PC-9 (cell line): ENCODE measurements at regions of chr10 and their contacts with region 1.

Region 1: GRCh38 chr10:13882112-13882711 is 295.4 kb downstream of the PRPF18 start:
- DNase-seq: peak; percentile 82 to 97
- H3K4me3 ChIP-seq: peak overlapping the region; percentile 19; the same call in 1 of the 2 replicates
- H3K27ac ChIP-seq: peak overlapping the region; percentile 85
- H3K4me1 ChIP-seq: peaks cover 46% of the 10 kb centered on the region
- H3K27me3 ChIP-seq: no peaks in the 10 kb centered on the region
- CTCF ChIP-seq: no peak

Region 2: DNA sequence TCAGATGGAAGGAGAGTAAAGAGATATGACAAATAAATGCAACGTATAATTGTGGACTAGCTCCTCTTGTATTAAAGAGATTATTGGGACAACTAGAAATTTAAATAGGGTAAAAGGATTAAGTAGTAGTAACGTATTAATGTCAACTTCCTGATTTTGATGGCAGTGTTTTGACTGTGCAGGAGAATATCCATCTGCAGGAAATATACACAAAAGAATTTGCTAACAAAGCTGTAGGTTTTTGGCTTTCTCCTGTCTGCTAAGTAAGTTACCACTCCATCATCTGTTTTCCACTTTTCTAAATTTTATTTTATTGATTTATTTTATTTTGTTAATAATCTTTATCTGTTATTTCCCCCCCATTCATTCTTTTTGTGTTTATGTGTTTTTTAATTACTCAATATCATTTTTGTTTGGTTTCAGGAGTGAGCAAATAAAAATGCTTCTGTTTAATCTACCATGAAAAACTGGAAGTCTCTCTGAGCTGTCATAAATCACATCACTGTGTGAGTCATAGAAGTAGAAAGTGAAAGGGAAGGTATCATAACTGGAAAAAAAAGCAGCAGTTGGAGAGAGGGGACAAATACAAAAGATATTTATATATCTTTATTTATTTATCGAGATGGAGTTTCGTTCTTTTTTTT is 325.4 kb before region 1 on chr10:
- CTCF ChIA-PET with region 1: no interaction called
- POLR2A ChIA-PET with region 1: no interaction called
- intact Hi-C with region 1: no loop called
- DNase-seq: peak in 1 of 2 experiments; percentile 71
- H3K4me3 ChIP-seq: no peak overlapping the region
- H3K27ac ChIP-seq: no peak overlapping the region
- H3K4me1 ChIP-seq: 0 out of 2 replicates have a peak, but pooled peaks cover 7% of the 10 kb centered on the region
- H3K27me3 ChIP-seq: peaks cover 45% of the 10 kb centered on the region
- CTCF ChIP-seq: no peak

Region 3: GRCh38 chr10:13787015-13787421 is 95.2 kb before region 1 on chr10:
- CTCF ChIA-PET with region 1: no interaction called
- POLR2A ChIA-PET with region 1: no interaction called
- intact Hi-C with region 1: loop called (anchors 1 kb)
- DNase-seq: no peak
- H3K4me3 ChIP-seq: no peak overlapping the region
- H3K27ac ChIP-seq: no peak overlapping the region
- H3K4me1 ChIP-seq: peaks cover 15% of the 10 kb centered on the region
- H3K27me3 ChIP-seq: no peaks in the 10 kb centered on the region
- CTCF ChIP-seq: no peak

Region 4: GRCh38 chr10:13865758-13866491 is 16.3 kb before region 1 on chr10:
- CTCF ChIA-PET with region 1: interaction called, 3 read pairs
- POLR2A ChIA-PET with region 1: no interaction called
- intact Hi-C with region 1: loop called (anchors 1 kb)
- DNase-seq: peak; percentile 68 to 92
- H3K4me3 ChIP-seq: peak overlapping the region; percentile 35; the same call in 1 of the 2 replicates
- H3K27ac ChIP-seq: peak overlapping the region; percentile 93
- H3K4me1 ChIP-seq: peaks cover 30% of the 10 kb centered on the region
- H3K27me3 ChIP-seq: no peaks in the 10 kb centered on the region
- CTCF ChIP-seq: no peak

Region 5: DNA sequence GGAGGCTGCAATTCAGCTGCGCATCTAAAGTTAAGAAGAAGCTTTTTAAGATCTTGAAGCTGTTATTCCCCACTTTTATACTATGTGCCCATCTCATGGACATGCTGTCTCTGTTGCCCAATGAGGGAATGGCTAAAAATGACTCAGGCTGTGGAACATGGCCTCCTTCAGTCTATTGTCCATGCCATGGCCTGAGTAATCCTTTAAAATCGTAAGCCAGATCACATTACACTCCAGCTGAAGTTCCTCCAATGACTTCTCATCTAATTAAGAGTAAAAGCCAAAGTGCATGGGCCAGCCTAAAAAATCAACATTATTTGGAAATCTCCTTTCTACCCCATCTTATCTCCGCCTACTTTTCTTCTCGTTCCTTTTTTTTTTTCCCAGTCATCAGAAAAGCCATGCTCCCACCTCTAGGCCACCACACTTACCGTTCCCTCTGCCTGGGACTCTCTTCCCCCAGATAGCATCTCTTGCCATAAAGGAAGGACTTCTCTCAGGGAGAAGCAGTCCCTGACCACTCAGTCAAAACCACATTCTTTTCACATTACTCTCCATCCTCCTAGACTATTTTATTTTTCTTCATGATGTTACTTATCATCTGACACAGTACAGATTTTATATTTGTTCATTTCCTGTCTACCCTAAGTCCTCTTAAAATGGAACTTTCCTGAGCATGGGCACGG is 42.0 kb after region 1 on chr10:
- CTCF ChIA-PET with region 1: no interaction called
- POLR2A ChIA-PET with region 1: interaction called, 8 read pairs
- intact Hi-C with region 1: loop called (anchors 1 kb)
- DNase-seq: peak; percentile 37 to 76
- H3K4me3 ChIP-seq: no peak overlapping the region
- H3K27ac ChIP-seq: peak overlapping the region; percentile 67
- H3K4me1 ChIP-seq: peaks cover 18% of the 10 kb centered on the region
- H3K27me3 ChIP-seq: no peaks in the 10 kb centered on the region
- CTCF ChIP-seq: no peak

Region 6: GRCh38 chr10:13949844-13950595 is 67.8 kb after region 1 on chr10:
- CTCF ChIA-PET with region 1: no interaction called
- POLR2A ChIA-PET with region 1: no interaction called
- intact Hi-C with region 1: loop called (anchors 5 kb)
- DNase-seq: peak in 1 of 2 experiments; percentile 82
- H3K4me3 ChIP-seq: no peak overlapping the region
- H3K27ac ChIP-seq: peak overlapping the region; percentile 93
- H3K4me1 ChIP-seq: peaks cover 46% of the 10 kb centered on the region
- H3K27me3 ChIP-seq: no peaks in the 10 kb centered on the region
- CTCF ChIP-seq: no peak

Region 7: DNA sequence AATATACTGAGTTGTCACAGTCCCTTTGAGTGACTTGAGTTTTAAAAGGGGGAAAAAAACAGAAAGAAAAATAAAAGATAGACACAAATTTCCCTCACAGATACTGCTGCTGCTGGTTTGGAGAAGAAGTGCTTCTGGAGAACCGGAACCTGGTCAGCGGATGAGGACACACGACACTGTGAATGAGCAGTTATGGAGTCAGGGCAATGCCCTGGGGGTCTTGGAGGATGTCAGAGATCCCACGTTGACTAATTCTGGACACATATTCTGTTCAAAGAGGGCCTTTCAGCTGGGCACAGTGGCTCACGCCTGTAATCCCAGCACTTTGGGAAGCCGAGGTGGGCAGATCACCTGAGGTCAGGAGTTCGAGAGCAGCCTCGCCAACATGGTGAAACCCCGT is 1297.0 kb after region 1 on chr10:
- CTCF ChIA-PET with region 1: no interaction called
- POLR2A ChIA-PET with region 1: interaction called, 15 read pairs
- intact Hi-C with region 1: no loop called
- DNase-seq: no peak
- H3K4me3 ChIP-seq: no peak overlapping the region
- H3K27ac ChIP-seq: no peak overlapping the region
- H3K4me1 ChIP-seq: peaks cover 10% of the 10 kb centered on the region
- H3K27me3 ChIP-seq: no peaks in the 10 kb centered on the region
- CTCF ChIP-seq: no peak